T-cell (primary cell): ENCODE measurements at regions of chr19 and their contacts with region 1.

Region 1: GRCh38 chr19:33008738-33009137 is 36.7 kb downstream of the FAAP24 start:
- DNase-seq: no peak
- ATAC-seq: no peak
- H3K4me3 ChIP-seq: no peak overlapping the region
- H3K4me3 Mint-ChIP-seq: no peak overlapping the region
- H3K27ac ChIP-seq: no peak overlapping the region
- H3K27ac Mint-ChIP-seq: no peak overlapping the region
- H3K4me1 ChIP-seq: no peaks in the 10 kb centered on the region
- H3K4me1 Mint-ChIP-seq: no peaks in the 10 kb centered on the region
- H3K27me3 ChIP-seq: peaks cover 0 to 7% of the 10 kb centered on the region in 2 experiments
- H3K27me3 Mint-ChIP-seq: no peaks in the 10 kb centered on the region

Region 2: GRCh38 chr19:32902448-32902847 is 106.3 kb before region 1 on chr19:
- CTCF ChIA-PET with region 1: no interaction called
- POLR2A ChIA-PET with region 1: no interaction called
- DNase-seq: no peak
- ATAC-seq: no peak
- H3K4me3 ChIP-seq: no peak overlapping the region
- H3K4me3 Mint-ChIP-seq: no peak overlapping the region
- H3K27ac ChIP-seq: no peak overlapping the region
- H3K27ac Mint-ChIP-seq: no peak overlapping the region
- H3K4me1 ChIP-seq: no peaks in the 10 kb centered on the region
- H3K4me1 Mint-ChIP-seq: no peaks in the 10 kb centered on the region
- H3K27me3 ChIP-seq: no peaks in the 10 kb centered on the region
- H3K27me3 Mint-ChIP-seq: no peaks in the 10 kb centered on the region

Region 3: GRCh38 chr19:33035439-33035838 is 26.7 kb after region 1 on chr19:
- CTCF ChIA-PET with region 1: interaction called in 1 of 2 experiments, 11 read pairs
- POLR2A ChIA-PET with region 1: no interaction called
- DNase-seq: no peak
- ATAC-seq: no peak
- H3K4me3 ChIP-seq: no peak overlapping the region
- H3K4me3 Mint-ChIP-seq: no peak overlapping the region
- H3K27ac ChIP-seq: no peak overlapping the region
- H3K27ac Mint-ChIP-seq: no peak overlapping the region
- H3K4me1 ChIP-seq: peaks cover 0 to 10% of the 10 kb centered on the region in 2 experiments
- H3K4me1 Mint-ChIP-seq: peaks cover 10 to 11% (median 10%) of the 10 kb centered on the region in 3 donors
- H3K27me3 ChIP-seq: peaks cover 0 to 7% of the 10 kb centered on the region in 2 experiments
- H3K27me3 Mint-ChIP-seq: peaks cover 0 to 2% of the 10 kb centered on the region in 2 donors

Region 4: GRCh38 chr19:33125929-33126388 is 117.2 kb after region 1 on chr19:
- CTCF ChIA-PET with region 1: no interaction called
- POLR2A ChIA-PET with region 1: no interaction called
- DNase-seq: peak in 34 of 35 experiments; percentile 11 to 80 (median 40)
- ATAC-seq: peak; percentile 80 to 90 (median 85)
- H3K4me3 ChIP-seq: no peak overlapping the region
- H3K4me3 Mint-ChIP-seq: no peak overlapping the region
- H3K27ac ChIP-seq: no peak overlapping the region
- H3K27ac Mint-ChIP-seq: no peak overlapping the region
- H3K4me1 ChIP-seq: peaks cover 0 to 5% of the 10 kb centered on the region in 2 experiments
- H3K4me1 Mint-ChIP-seq: peaks cover 5 to 7% (median 6%) of the 10 kb centered on the region in 3 donors
- H3K27me3 ChIP-seq: no peaks in the 10 kb centered on the region
- H3K27me3 Mint-ChIP-seq: no peaks in the 10 kb centered on the region